ENCODE measurements at regions of chr2 and their contacts with region 1.

Region 1: DNA sequence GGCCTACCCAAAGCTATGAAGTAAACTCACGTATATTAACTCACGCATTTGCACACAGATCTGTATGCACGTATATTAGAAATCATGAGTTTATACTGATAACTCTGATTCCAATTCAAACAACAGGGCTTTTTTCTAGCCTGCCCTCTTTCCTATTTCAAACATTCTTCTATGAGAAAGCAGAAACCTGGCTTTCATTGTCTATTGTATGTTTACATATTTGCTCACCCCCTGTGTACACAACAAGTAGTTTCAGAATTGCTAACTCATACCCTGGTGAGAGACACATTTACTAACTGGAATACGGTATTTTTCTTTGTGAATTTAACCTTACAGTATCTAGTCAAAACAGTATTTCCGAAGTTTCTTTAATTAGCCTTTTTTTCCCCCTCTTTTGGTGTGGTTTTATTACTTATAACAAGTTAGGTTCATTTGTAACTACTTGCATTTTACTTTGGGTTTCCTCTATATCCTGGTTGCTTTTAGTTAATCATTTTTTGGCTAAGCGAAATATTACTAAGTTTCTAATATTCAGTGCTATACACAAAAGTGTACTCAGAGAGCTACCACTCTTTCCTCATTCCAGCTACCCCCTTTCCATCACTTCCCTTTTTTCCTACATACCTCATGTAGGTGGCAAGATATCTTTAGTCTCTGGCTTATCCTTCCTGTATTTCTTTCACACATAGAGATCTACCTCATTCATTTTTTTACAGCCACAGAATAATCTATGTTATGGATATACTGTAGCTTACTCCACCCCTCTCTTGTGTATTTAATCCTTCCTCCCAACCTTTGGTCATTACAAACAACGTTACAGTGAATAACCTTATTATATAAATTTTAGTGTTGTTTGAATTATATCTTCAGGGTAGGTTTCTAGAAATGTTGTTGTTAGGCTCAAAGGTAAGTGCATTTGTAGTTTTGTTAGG is 112.7 kb upstream of the BCL2L11 start:
- DNase-seq: no peak
- H3K4me3 ChIP-seq: no peak overlapping the region
- H3K27ac ChIP-seq: peak overlapping the region; percentile 71 to 80 (median 78)
- H3K4me1 ChIP-seq: peaks cover 0 to 29% (median 15%) of the 10 kb centered on the region in 4 donors
- H3K27me3 ChIP-seq: no peaks in the 10 kb centered on the region
- CTCF ChIP-seq: no peak
- EP300 ChIP-seq: no peak
- POLR2A ChIP-seq: no peak

Region 2: DNA sequence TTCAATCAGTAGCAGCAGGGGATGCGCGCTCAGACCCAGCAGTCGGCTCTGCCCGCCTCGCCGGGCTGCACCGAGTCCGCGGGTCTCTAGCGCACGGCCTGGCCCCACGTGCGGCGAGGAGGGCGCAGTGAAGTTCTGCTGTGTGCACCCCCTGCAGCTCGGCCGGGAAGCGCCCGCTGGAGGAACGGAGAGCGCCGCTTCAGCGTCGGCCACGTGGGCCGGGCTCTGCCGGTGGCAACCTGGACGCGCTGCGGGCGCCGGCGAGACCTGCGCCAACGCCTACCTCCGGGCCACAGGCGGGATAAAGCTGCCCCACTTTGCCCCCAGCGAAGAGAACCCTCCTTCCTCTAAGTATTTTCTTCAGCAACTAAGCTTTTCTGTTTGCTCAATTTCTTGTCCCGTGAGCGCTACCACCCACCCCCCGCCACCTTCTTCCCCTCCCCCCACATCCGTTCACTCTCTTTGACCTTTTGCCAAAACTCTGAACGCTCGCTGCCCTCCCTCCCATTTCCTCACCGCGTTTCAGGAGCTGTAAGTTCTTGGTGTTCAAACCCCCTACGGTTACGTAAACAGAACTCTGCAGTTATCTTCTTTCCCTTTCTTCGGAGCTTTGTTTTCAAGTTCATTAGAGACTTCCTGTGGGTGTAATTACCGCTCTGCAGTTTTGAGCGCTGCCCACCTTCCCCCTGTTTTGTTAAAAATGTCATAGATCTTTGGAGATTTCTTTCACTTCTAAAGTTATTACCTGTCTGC is 1976.4 kb before region 1 on chr2:
- in situ Hi-C with region 1: no loop called
- intact Hi-C with region 1: loop called (anchors 5 kb)
- DNase-seq: peak; percentile 49
- H3K4me3 ChIP-seq: peak overlapping the region; percentile 14 to 43 (median 27)
- H3K27ac ChIP-seq: peak overlapping the region; percentile 34 to 59 (median 46)
- H3K4me1 ChIP-seq: peaks cover 0 to 9% (median 6%) of the 10 kb centered on the region in 4 donors
- H3K27me3 ChIP-seq: no peaks in the 10 kb centered on the region
- CTCF ChIP-seq: no peak
- EP300 ChIP-seq: no peak
- POLR2A ChIP-seq: peak; percentile 21

Region 3: GRCh38 chr2:110940376-110940910 is 67.6 kb before region 1 on chr2:
- in situ Hi-C with region 1: no loop called
- intact Hi-C with region 1: no loop called
- DNase-seq: no peak
- H3K4me3 ChIP-seq: no peak overlapping the region
- H3K27ac ChIP-seq: no peak overlapping the region
- H3K4me1 ChIP-seq: no peaks in the 10 kb centered on the region
- H3K27me3 ChIP-seq: no peaks in the 10 kb centered on the region
- CTCF ChIP-seq: no peak
- EP300 ChIP-seq: no peak
- POLR2A ChIP-seq: no peak

Measured in transverse colon (tissue), 4 donors.